ENCODE measurements at regions of chr2 and their contacts with region 1.

Region 1: DNA sequence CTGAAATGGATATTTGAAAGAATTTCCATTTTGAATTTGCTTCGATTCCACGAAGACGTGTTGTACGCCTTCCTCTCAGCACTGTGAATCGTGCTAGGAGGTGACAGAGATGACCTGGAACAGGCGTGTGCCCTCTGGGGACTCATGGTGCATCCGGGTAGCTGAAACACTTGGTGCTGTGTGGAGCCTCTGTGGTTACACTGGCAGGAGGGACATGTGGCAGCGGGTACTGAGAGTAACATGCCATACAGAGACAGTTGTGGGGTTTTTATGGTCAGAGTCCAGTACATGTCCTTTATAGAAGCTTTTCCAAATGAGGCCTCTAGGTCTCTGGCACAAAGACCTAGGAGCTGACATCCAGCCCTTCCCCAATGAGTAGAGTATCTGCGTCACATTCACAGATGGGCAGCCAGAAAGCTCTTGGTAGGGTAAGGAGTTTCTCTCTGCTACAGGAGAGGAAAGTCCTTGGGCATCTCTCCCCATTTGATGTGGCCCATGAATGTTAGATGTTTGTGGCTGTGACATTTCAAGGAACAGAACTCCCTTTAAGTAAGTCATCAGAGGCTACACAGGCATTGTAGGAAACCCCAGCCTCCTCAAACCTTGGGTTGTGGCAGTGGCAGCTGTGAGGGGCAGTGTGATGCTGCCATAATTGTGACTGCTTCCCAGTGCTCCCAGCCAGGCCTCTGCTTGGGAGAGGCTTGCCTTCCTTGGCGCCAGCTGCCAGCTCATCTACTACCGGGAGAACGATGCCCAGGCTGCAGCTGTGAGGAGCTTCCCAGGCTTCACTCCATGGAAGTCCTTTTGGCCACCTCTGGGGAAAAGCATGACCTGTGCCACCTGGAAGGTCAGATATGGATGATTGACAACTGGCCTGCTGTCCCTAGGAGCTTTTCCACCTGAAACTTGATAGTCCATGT is 80.6 kb downstream of the ACOXL start:
- DNase-seq: no peak
- H3K4me3 ChIP-seq: no peak overlapping the region
- H3K27ac ChIP-seq: no peak overlapping the region
- H3K4me1 ChIP-seq: peaks cover 0 to 6% (median 0%) of the 10 kb centered on the region in 4 experiments; a peak in 1 of 7 replicates
- H3K27me3 ChIP-seq: no peaks in the 10 kb centered on the region
- CTCF ChIP-seq: no peak
- EP300 ChIP-seq: no peak
- POLR2A ChIP-seq: no peak
- RAD21 ChIP-seq: no peak

Region 2: DNA sequence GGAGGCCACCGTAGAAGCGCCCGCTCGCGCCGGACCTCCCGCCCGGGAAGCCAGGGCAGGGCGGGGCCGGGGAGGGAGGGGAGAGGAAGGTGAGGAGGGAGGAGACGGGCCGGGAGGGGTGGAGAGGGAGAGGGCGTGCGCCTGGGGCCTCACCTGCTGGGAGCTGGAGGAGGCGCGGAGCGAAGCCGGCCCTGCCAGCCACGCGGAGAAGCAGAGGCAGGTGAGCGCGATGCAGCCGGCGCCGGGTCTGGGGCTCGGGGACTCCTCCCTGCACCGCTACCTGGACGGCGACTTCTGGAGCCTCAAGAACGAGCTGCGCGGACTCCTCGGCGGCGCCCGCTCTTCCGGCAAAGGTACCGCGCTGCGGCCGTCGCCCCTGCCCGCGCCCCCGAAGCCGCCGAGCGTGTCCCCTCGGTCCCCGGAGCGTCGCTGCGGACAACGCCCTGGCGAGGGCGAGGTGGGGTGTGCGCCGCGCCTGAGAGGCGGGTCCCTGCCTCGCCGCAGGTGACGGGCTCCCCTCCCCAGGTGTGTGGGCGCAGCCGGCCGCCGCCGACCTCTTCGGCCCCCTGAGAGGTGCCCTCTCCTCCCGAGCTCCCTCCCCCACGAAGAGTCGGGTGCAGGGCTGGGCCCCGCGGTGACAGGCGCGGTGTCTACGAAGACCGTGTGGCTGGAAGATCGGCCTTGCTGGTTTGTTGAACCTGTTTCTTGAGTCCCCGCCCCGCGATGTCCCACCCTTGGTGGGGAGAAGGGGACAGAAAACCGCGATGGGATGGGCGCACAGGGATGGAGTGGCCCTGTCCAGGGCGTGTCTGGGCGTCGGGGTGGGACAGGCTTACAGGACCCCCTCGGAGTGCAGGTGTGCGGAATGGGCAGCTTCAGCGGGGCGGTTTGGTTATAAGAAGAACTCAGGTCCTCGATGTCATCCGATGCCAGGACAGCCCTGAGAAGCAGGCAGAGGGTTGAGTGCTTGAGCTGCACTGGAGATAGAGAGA is 80.3 kb before region 1 on chr2 and contains the start of gene ACOXL:
- CTCF ChIA-PET with region 1: no interaction called
- POLR2A ChIA-PET with region 1: no interaction called
- DNase-seq: peak; percentile 68 to 89
- H3K4me3 ChIP-seq: peak within 1 kb of the TSS; percentile 61 to 81 (median 79)
- H3K27ac ChIP-seq: no peak within 1 kb of the TSS
- H3K4me1 ChIP-seq: peaks cover 3 to 18% (median 10%) of the 10 kb centered on the region in 4 experiments
- H3K27me3 ChIP-seq: peaks cover 0 to 10% (median 2%) of the 10 kb centered on the region in 4 experiments; a peak in 3 of 7 replicates
- CTCF ChIP-seq: no peak
- EP300 ChIP-seq: peak in 1 of 2 experiments; percentile 8; a peak in 1 of 3 replicates
- POLR2A ChIP-seq: peak in 1 of 2 experiments; percentile 49; a peak in 1 of 3 replicates
- RAD21 ChIP-seq: peak in 1 of 2 experiments; percentile 23; a peak in 1 of 4 replicates
- total RNA-seq, gene ACOXL: 20.6 and 20.8 TPM in 2 replicates

Region 3: GRCh38 chr2:110788976-110789375 is 24.0 kb before region 1 on chr2:
- CTCF ChIA-PET with region 1: interaction called, 29 read pairs
- POLR2A ChIA-PET with region 1: interaction called, 3 read pairs
- DNase-seq: peak in 1 of 2 experiments; percentile 14
- H3K4me3 ChIP-seq: no peak overlapping the region
- H3K27ac ChIP-seq: no peak overlapping the region
- H3K4me1 ChIP-seq: no peaks in the 10 kb centered on the region
- H3K27me3 ChIP-seq: no peaks in the 10 kb centered on the region
- CTCF ChIP-seq: no peak
- EP300 ChIP-seq: no peak
- POLR2A ChIP-seq: no peak
- RAD21 ChIP-seq: no peak

Region 4: GRCh38 chr2:110800611-110801402 is 12.2 kb before region 1 on chr2:
- CTCF ChIA-PET with region 1: interaction called, 10 read pairs
- POLR2A ChIA-PET with region 1: interaction called, 3 read pairs
- DNase-seq: no peak
- H3K4me3 ChIP-seq: no peak overlapping the region
- H3K27ac ChIP-seq: no peak overlapping the region
- H3K4me1 ChIP-seq: peaks cover 2 to 19% (median 5%) of the 10 kb centered on the region in 4 experiments; a peak in 5 of 7 replicates
- H3K27me3 ChIP-seq: no peaks in the 10 kb centered on the region
- CTCF ChIP-seq: no peak
- EP300 ChIP-seq: no peak
- POLR2A ChIP-seq: no peak
- RAD21 ChIP-seq: no peak

Region 5: GRCh38 chr2:110837446-110838405 is 24.7 kb after region 1 on chr2:
- CTCF ChIA-PET with region 1: interaction called, 25 read pairs
- POLR2A ChIA-PET with region 1: interaction called, 3 read pairs
- DNase-seq: no peak
- H3K4me3 ChIP-seq: no peak overlapping the region
- H3K27ac ChIP-seq: 0 out of 2 replicates have a peak overlapping the region, but pooled peaks have one; percentile 45
- H3K4me1 ChIP-seq: peaks cover 16 to 51% (median 40%) of the 10 kb centered on the region in 4 experiments
- H3K27me3 ChIP-seq: no peaks in the 10 kb centered on the region
- CTCF ChIP-seq: no peak
- EP300 ChIP-seq: no peak
- POLR2A ChIP-seq: no peak
- RAD21 ChIP-seq: no peak

Region 6: GRCh38 chr2:110853507-110853906 is 40.5 kb after region 1 on chr2:
- CTCF ChIA-PET with region 1: interaction called, 52 read pairs
- POLR2A ChIA-PET with region 1: no interaction called
- DNase-seq: no peak
- H3K4me3 ChIP-seq: no peak overlapping the region
- H3K27ac ChIP-seq: no peak overlapping the region
- H3K4me1 ChIP-seq: peaks cover 2 to 13% (median 6%) of the 10 kb centered on the region in 4 experiments; a peak in 5 of 7 replicates
- H3K27me3 ChIP-seq: no peaks in the 10 kb centered on the region
- CTCF ChIP-seq: peak; percentile 55 to 81 (median 65)
- EP300 ChIP-seq: no peak
- POLR2A ChIP-seq: no peak
- RAD21 ChIP-seq: peak; percentile 26 to 47

Region 7: DNA sequence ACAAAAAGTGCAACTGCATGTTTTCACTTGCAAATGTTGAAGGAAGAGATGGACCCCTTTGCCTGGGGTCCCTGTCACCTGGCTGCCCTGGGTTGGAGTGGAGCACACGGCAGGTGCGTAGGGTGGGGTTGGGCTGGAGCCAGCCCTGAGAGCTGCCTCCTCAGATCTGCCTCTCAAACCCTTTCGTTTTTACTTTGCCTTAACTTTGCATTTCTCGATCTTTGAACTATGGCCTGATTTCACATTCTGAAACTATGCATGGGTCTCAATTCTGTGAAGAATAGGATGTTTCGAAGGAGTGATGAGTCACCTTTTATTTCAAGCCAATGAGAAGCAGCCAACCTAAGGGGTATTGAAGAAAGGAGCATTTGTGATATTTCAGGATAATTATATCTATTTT is 52.2 kb after region 1 on chr2:
- CTCF ChIA-PET with region 1: interaction called, 16 read pairs
- POLR2A ChIA-PET with region 1: no interaction called
- DNase-seq: no peak
- H3K4me3 ChIP-seq: no peak overlapping the region
- H3K27ac ChIP-seq: no peak overlapping the region
- H3K4me1 ChIP-seq: peaks cover 0 to 11% (median 0%) of the 10 kb centered on the region in 4 experiments; a peak in 5 of 7 replicates
- H3K27me3 ChIP-seq: no peaks in the 10 kb centered on the region
- CTCF ChIP-seq: no peak
- EP300 ChIP-seq: no peak
- POLR2A ChIP-seq: no peak
- RAD21 ChIP-seq: no peak

Region 8: GRCh38 chr2:110874453-110875383 is 61.7 kb after region 1 on chr2:
- CTCF ChIA-PET with region 1: interaction called, 15 read pairs
- POLR2A ChIA-PET with region 1: no interaction called
- DNase-seq: no peak
- H3K4me3 ChIP-seq: no peak overlapping the region
- H3K27ac ChIP-seq: no peak overlapping the region
- H3K4me1 ChIP-seq: peaks cover 0 to 12% (median 3%) of the 10 kb centered on the region in 4 experiments; a peak in 3 of 7 replicates
- H3K27me3 ChIP-seq: no peaks in the 10 kb centered on the region
- CTCF ChIP-seq: no peak
- EP300 ChIP-seq: no peak
- POLR2A ChIP-seq: no peak
- RAD21 ChIP-seq: no peak